ENCODE measurements at regions of chr1 and their contacts with region 1.

Region 1: DNA sequence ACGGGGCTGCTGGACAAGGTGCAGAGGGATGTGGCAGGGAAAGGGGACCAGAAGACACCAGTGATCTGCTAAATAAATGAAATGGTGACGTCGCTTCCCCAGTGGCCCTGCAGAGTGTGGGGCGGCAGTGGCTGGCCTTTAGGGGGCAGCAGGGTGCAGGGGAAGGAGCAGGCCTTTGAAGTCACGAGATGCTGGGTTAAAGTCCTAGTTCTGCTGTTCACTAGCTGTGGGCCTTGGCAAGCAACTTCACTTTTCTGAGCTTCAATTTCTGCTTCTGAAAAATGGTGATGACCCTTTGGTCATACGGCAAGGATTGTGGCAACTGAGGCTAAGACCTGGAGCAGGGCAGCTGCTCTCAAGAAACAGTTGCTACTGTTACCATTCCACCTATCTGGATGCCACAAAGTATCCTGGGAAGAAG is 9.2 kb upstream of the GALE start:
- DNase-seq: peak; percentile 89
- H3K4me3 Mint-ChIP-seq: no peak overlapping the region
- H3K27ac Mint-ChIP-seq: no peak overlapping the region
- H3K4me1 Mint-ChIP-seq: peaks cover 12% of the 10 kb centered on the region
- H3K27me3 Mint-ChIP-seq: no peaks in the 10 kb centered on the region

Region 2: GRCh38 chr1:23661887-23662286 is 147.9 kb before region 1 on chr1:
- CTCF ChIA-PET with region 1: no interaction called
- POLR2A ChIA-PET with region 1: no interaction called
- intact Hi-C with region 1: no loop called
- DNase-seq: no peak
- H3K4me3 Mint-ChIP-seq: no peak overlapping the region
- H3K27ac Mint-ChIP-seq: no peak overlapping the region
- H3K4me1 Mint-ChIP-seq: peaks cover 6% of the 10 kb centered on the region
- H3K27me3 Mint-ChIP-seq: no peaks in the 10 kb centered on the region

Region 3: GRCh38 chr1:23772049-23772853 is 37.5 kb before region 1 on chr1:
- CTCF ChIA-PET with region 1: interaction called, 22 read pairs
- POLR2A ChIA-PET with region 1: no interaction called
- intact Hi-C with region 1: no loop called
- DNase-seq: peak; percentile 91
- H3K4me3 Mint-ChIP-seq: no peak overlapping the region
- H3K27ac Mint-ChIP-seq: no peak overlapping the region
- H3K4me1 Mint-ChIP-seq: peaks cover 22% of the 10 kb centered on the region
- H3K27me3 Mint-ChIP-seq: no peaks in the 10 kb centered on the region

Region 4: DNA sequence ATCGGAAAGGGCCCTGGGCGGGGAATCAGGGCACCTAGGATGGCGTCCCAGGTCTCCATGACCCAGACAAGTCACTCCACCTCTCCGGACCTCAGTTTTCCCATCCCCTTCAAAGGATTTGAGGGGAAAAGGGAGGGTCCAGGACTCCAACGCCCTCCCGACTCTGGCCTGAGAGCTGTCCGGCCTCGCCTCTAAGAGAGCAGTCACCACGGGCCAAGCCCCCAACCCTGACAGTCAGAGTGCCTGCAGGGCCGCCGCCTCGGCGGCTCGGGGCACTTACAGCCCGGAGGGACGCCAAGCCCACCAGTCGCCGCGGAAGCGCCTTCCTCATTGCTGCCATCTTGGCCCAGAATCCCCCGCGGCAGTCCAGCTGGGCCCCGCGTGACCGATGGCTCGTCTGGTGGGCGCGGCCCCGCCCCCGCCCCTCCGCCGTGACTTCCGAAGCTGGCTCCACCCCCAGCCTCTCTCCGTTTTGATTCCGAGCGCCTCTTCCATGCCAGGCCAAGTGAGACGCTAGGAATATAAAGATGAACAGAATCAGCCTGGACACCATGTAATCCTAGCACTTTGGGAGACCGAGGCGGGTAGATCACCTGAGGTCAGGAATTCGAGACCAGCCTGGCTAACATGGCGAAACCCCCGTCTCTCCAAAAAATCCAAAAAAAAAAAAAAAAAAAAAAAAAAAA is 15.5 kb after region 1 on chr1 and contains the start of gene HMGCL:
- CTCF ChIA-PET with region 1: interaction called, 84 read pairs
- POLR2A ChIA-PET with region 1: interaction called, 5 read pairs
- intact Hi-C with region 1: no loop called
- DNase-seq: peak; percentile 94
- H3K4me3 Mint-ChIP-seq: peak within 1 kb of the TSS; percentile 97
- H3K27ac Mint-ChIP-seq: peak within 1 kb of the TSS; percentile 95
- H3K4me1 Mint-ChIP-seq: peaks cover 17% of the 10 kb centered on the region
- H3K27me3 Mint-ChIP-seq: no peaks in the 10 kb centered on the region
- total RNA-seq, gene HMGCL: 34.2 to 35.3 TPM

Region 5: GRCh38 chr1:23854568-23854967 is 44.8 kb after region 1 on chr1:
- CTCF ChIA-PET with region 1: interaction called, 11 read pairs
- POLR2A ChIA-PET with region 1: no interaction called
- intact Hi-C with region 1: no loop called
- DNase-seq: no peak
- H3K4me3 Mint-ChIP-seq: no peak overlapping the region
- H3K27ac Mint-ChIP-seq: no peak overlapping the region
- H3K4me1 Mint-ChIP-seq: no peaks in the 10 kb centered on the region
- H3K27me3 Mint-ChIP-seq: no peaks in the 10 kb centered on the region

Region 6: DNA sequence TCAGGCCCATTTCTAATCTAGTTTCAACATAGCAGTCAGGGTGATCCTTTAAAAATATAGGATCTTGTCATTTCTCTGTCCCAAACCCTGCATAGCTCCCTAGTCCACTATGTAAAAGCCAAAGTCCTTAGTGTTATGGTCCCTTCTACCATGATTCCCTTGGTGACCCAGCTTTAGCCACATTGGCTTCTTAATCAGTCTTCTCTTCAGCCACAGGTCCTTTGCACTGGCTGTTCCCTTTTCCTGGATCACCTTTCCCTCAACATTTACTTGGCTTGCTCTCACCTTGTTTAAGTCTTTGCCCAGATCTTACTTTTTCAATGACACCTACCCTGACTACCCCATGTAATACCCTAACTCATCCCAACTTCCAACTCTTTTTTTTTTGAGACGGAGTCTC is 70.0 kb after region 1 on chr1:
- CTCF ChIA-PET with region 1: no interaction called
- POLR2A ChIA-PET with region 1: no interaction called
- intact Hi-C with region 1: no loop called
- DNase-seq: no peak
- H3K4me3 Mint-ChIP-seq: no peak overlapping the region
- H3K27ac Mint-ChIP-seq: no peak overlapping the region
- H3K4me1 Mint-ChIP-seq: no peaks in the 10 kb centered on the region
- H3K27me3 Mint-ChIP-seq: no peaks in the 10 kb centered on the region

Region 7: GRCh38 chr1:23904748-23905357 is 95.1 kb after region 1 on chr1:
- CTCF ChIA-PET with region 1: no interaction called
- POLR2A ChIA-PET with region 1: no interaction called
- intact Hi-C with region 1: no loop called
- DNase-seq: peak; percentile 78
- H3K4me3 Mint-ChIP-seq: no peak overlapping the region
- H3K27ac Mint-ChIP-seq: peak overlapping the region; percentile 1
- H3K4me1 Mint-ChIP-seq: peaks cover 26% of the 10 kb centered on the region
- H3K27me3 Mint-ChIP-seq: peaks cover 23% of the 10 kb centered on the region

Region 8: DNA sequence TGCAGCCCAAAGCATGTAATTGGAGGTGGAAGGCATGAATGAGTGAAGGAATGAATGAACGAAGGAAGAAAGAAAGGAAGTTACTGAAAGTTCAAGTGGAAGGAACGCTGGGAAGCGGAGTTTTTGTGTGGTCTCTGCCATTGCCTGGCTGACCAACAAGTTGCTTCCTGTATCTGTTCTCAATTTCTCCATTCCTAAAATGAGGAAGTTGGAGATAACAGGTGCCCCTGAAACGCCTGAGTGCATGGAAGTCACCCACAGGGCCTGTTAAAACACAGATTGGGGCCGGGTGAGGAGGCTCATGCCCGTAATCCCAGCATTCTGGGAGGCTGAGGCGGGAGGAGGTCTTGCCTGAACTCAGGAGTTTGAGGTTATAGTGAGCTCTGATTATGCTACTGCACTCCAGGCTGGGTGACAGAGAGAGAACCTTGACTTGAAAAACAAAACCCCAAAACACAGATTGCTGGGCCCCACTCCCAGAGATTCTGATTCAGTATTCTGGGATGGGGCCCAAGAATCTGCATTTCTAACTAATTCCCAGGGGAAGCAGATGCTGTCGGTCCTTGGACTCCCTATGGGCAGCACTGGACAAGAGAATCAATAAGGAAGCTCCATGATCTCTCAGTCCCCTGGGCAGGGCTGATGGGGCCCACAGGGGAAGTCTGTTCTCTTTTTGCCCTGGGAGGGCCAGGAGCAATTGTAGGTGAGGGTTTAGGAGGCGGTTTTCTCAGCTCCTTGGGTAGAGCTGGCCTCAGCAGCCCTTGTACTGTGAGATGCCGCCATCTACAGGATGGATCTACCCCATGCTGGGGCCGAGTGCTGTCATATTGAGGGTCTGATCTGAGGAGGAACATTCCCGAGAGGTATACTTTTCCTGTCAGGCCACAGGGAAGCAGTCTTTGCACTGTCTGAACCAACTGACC is 106.7 kb after region 1 on chr1:
- CTCF ChIA-PET with region 1: interaction called, 58 read pairs
- POLR2A ChIA-PET with region 1: no interaction called
- intact Hi-C with region 1: loop called (anchors 2 kb)
- DNase-seq: peak; percentile 69
- H3K4me3 Mint-ChIP-seq: no peak overlapping the region
- H3K27ac Mint-ChIP-seq: no peak overlapping the region
- H3K4me1 Mint-ChIP-seq: peaks cover 11% of the 10 kb centered on the region
- H3K27me3 Mint-ChIP-seq: no peaks in the 10 kb centered on the region